Right ventricle myocardium superior (tissue), 1 donor: ENCODE measurements at regions of chr9 and their contacts with region 1.

Region 1: GRCh38 chr9:125407974-125408900 is 146.6 kb downstream of the GAPVD1 start:
- DNase-seq: peak; percentile 87
- ATAC-seq: peak; percentile 96

Region 2: GRCh38 chr9:125626187-125626586 is 217.9 kb after region 1 on chr9:
- intact Hi-C with region 1: loop called (anchors 5 kb)
- DNase-seq: no peak
- ATAC-seq: no peak

Region 3: GRCh38 chr9:126228781-126229444 is 820.7 kb after region 1 on chr9:
- intact Hi-C with region 1: loop called (anchors 5 kb)
- DNase-seq: peak; percentile 82
- ATAC-seq: peak; percentile 95